ENCODE measurements at regions of chr22 and their contacts with region 1.

Region 1: DNA sequence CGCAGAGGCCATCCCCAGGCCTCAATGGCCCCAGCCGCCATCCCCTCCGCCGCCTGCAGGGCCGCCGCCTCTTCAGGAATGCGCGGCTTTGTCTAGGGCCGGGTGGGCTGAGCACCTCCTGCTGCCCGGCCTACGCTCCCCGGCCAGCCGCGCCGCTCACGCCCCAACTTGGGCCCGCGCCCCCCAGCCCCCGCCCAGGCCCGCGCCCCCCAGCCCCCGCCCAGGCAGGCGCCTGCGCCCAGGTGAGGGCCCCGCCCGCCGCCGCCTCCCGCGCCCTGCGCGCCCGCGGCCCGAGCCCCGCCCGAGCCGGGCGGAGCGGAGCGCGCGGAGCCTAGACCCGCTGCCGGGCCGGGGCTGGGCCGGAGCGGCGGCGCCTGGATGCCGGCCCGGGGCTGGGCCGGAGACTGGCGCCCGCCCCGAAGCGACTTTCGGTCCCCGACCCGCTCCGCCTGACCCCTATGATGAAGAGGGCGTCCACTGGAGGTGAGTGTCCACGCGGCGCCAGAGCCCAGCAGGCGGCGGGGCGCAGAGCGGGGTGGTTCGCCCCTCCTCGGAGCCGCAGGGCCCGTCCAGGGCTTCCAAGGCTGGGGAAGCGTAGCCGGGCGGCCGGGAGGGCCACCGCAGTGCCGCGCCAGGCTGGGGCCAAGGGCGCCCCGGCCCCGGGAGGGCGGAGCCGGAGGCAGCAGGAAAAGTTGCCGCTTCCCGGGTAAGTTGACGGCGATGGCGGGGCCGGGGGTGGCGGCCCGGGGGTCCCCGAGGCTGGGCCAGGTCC is 34.3 kb upstream of the PRODH start:
- DNase-seq: no peak
- ATAC-seq: peak; percentile 58
- H3K4me3 ChIP-seq: peak overlapping the region; percentile 3; the same call in 1 of the 2 replicates
- H3K27ac ChIP-seq: no peak overlapping the region
- H3K4me1 ChIP-seq: no peaks in the 10 kb centered on the region
- H3K27me3 ChIP-seq: peaks cover 15% of the 10 kb centered on the region; the same call in 1 of the 2 replicates
- CTCF ChIP-seq: no peak
- POLR2A ChIP-seq: no peak
- RAD21 ChIP-seq: no peak

Region 2: DNA sequence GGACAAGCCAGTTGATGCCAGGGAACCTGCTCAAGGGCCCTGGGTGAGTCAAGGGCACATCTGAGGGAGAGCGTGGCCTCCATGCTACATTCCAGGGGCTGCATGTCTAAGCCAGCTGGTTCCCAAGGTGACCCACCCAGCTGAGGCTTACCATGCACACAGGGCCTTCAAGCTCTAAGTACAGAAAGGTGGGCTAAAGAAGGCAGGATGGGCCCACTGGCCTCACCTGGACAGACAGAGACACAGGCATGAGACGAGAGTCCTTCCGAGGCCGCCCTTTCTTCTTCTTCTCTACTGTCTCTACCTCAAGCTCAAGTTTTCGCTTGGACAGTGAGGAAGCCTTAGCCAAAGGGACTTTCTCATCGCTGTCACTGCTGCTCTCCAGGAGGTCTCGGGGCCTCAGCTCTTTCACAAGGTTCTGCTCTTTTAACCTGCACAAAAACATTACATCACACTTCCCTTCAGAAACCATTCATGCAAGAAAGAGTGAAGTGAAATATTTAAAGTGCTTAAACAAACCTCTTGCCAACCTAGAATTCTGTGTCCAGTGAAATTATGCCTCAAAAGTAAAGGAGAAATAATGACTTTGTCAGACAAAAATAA is 391.2 kb after region 1 on chr22:
- CTCF ChIA-PET with region 1: no interaction called
- POLR2A ChIA-PET with region 1: no interaction called
- dilution Hi-C with region 1: no loop called
- in situ Hi-C with region 1: loop called (anchors 25 kb)
- intact Hi-C with region 1: no loop called
- DNase-seq: no peak
- ATAC-seq: no peak
- H3K4me3 ChIP-seq: no peak overlapping the region
- H3K27ac ChIP-seq: no peak overlapping the region
- H3K4me1 ChIP-seq: peaks cover 10% of the 10 kb centered on the region
- H3K27me3 ChIP-seq: no peaks in the 10 kb centered on the region
- CTCF ChIP-seq: no peak
- POLR2A ChIP-seq: no peak
- RAD21 ChIP-seq: no peak

Measured in IMR-90 (cell line).